ENCODE measurements at regions of chr19 and their contacts with region 1.

Region 1: DNA sequence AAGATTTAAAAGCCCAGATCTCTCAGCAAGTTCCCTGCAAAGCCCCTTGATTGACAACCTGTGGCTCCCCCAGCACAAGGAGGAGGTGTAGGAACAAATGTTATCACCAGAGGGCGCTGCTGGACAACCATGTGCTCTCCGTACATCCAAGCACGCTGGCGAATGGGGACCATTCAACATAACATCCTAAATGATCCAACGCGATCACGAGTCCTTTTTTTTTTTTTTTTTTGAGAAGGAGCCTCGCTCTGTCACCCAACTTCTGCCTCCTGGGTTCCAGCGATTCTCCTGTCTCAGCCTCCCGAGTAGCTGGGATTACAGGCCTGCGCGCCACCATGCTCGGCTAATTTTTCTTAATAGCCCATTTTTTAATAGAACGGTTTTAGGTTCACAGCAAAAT is 52.0 kb downstream of the NWD1 start:
- DNase-seq: peak; percentile 79 to 85 (median 83)
- ATAC-seq: peak; percentile 96
- H3K4me3 ChIP-seq: no peak overlapping the region
- H3K27ac ChIP-seq: no peak overlapping the region
- H3K4me1 ChIP-seq: no peaks in the 10 kb centered on the region
- H3K27me3 ChIP-seq: peaks cover 0 to 6% of the 10 kb centered on the region in 2 experiments; a peak in 2 of 5 replicates
- CTCF ChIP-seq: peak; percentile 84 to 90 (median 85)
- EP300 ChIP-seq: no peak
- POLR2A ChIP-seq: no peak
- RAD21 ChIP-seq: peak; percentile 71 to 91

Region 2: GRCh38 chr19:16637535-16637934 is 134.1 kb before region 1 on chr19:
- CTCF ChIA-PET with region 1: no interaction called
- POLR2A ChIA-PET with region 1: no interaction called
- in situ Hi-C with region 1: no loop called
- intact Hi-C with region 1: no loop called
- DNase-seq: no peak
- ATAC-seq: no peak
- H3K4me3 ChIP-seq: no peak overlapping the region
- H3K27ac ChIP-seq: no peak overlapping the region
- H3K4me1 ChIP-seq: no peaks in the 10 kb centered on the region; a peak in 1 of 5 replicates
- H3K27me3 ChIP-seq: no peaks in the 10 kb centered on the region
- CTCF ChIP-seq: no peak
- EP300 ChIP-seq: no peak
- POLR2A ChIP-seq: no peak
- RAD21 ChIP-seq: no peak

Region 3: DNA sequence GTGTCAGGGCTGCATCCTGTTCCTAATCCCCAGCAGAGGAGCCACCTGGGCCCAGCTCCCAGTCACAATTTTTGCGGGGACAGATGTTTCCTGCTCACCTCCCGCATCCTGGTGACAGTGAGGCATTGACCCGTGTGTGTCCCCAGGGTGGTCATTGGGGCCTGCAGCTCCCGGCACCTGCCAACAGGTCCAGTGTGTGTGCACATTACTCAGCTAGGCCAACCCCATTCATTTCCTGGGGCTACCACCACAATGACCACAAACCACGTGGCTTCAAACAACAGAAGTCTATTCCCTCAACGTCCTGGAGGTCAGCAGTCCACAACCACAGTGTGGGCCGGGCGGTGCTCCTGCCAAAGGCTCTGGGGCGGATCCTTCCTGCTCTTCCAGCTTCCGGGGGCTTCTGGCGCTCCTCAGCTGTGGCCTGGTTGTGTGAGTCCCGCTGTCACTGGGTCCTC is 105.3 kb after region 1 on chr19:
- CTCF ChIA-PET with region 1: no interaction called
- POLR2A ChIA-PET with region 1: no interaction called
- in situ Hi-C with region 1: no loop called
- intact Hi-C with region 1: no loop called
- DNase-seq: no peak
- ATAC-seq: no peak
- H3K4me3 ChIP-seq: no peak overlapping the region
- H3K27ac ChIP-seq: no peak overlapping the region
- H3K4me1 ChIP-seq: peaks cover 0 to 12% of the 10 kb centered on the region in 2 experiments; a peak in 2 of 5 replicates
- H3K27me3 ChIP-seq: no peaks in the 10 kb centered on the region
- CTCF ChIP-seq: no peak
- EP300 ChIP-seq: no peak
- POLR2A ChIP-seq: no peak
- RAD21 ChIP-seq: no peak

Region 4: GRCh38 chr19:16897154-16897855 is 125.7 kb after region 1 on chr19:
- CTCF ChIA-PET with region 1: interaction called, 21 read pairs
- POLR2A ChIA-PET with region 1: interaction called, 4 read pairs
- in situ Hi-C with region 1: no loop called
- intact Hi-C with region 1: loop called (anchors 2 kb)
- DNase-seq: peak; percentile 96 to 99 (median 96)
- ATAC-seq: peak; percentile 86
- H3K4me3 ChIP-seq: peak overlapping the region; percentile 71
- H3K27ac ChIP-seq: peak overlapping the region; percentile 88
- H3K4me1 ChIP-seq: peaks cover 14 to 61% of the 10 kb centered on the region in 2 experiments
- H3K27me3 ChIP-seq: no peaks in the 10 kb centered on the region
- CTCF ChIP-seq: no peak
- EP300 ChIP-seq: no peak
- POLR2A ChIP-seq: peak; percentile 77
- RAD21 ChIP-seq: no peak

Region 5: DNA sequence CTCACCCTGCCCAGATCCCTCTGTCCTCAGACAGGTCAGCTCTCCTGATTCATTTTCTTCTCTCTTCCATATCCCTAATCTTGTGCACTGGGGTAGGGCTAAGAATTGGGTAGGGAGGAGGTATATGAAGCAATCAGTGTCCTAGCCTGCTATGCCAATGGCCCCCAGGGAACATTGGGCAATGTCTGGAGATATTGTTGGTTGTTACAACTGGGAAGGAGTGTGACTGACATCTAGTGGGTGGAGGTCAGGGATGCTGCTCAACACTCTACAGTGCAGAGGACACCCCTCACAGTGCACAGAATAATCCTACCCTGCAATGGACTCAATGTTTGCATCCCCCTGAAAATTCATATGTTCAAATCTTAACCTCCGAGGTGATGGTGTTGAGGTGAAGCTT is 197.5 kb after region 1 on chr19:
- CTCF ChIA-PET with region 1: interaction called, 3 read pairs
- POLR2A ChIA-PET with region 1: no interaction called
- in situ Hi-C with region 1: no loop called
- intact Hi-C with region 1: loop called (anchors 2 kb)
- DNase-seq: peak in 2 of 4 experiments; percentile 37 to 47
- ATAC-seq: peak; percentile 95
- H3K4me3 ChIP-seq: no peak overlapping the region
- H3K27ac ChIP-seq: no peak overlapping the region
- H3K4me1 ChIP-seq: no peaks in the 10 kb centered on the region
- H3K27me3 ChIP-seq: peaks cover 6 to 19% of the 10 kb centered on the region in 2 experiments; a peak in 3 of 5 replicates
- CTCF ChIP-seq: peak; percentile 51 to 69 (median 64)
- EP300 ChIP-seq: no peak
- POLR2A ChIP-seq: no peak
- RAD21 ChIP-seq: peak in 1 of 2 experiments; percentile 82; a peak in 2 of 4 replicates

Region 6: GRCh38 chr19:17052439-17053210 is 281.0 kb after region 1 on chr19:
- CTCF ChIA-PET with region 1: interaction called, 10 read pairs
- POLR2A ChIA-PET with region 1: no interaction called
- in situ Hi-C with region 1: no loop called
- intact Hi-C with region 1: loop called (anchors 5 kb)
- DNase-seq: peak in 2 of 4 experiments; percentile 39 to 48
- ATAC-seq: peak; percentile 63
- H3K4me3 ChIP-seq: no peak overlapping the region
- H3K27ac ChIP-seq: no peak overlapping the region
- H3K4me1 ChIP-seq: no peaks in the 10 kb centered on the region
- H3K27me3 ChIP-seq: no peaks in the 10 kb centered on the region
- CTCF ChIP-seq: peak; percentile 32 to 65 (median 53)
- EP300 ChIP-seq: no peak
- POLR2A ChIP-seq: no peak
- RAD21 ChIP-seq: peak; percentile 21 to 44; a peak in 2 of 4 replicates

Region 7: GRCh38 chr19:17282488-17283255 is 511.1 kb after region 1 on chr19:
- CTCF ChIA-PET with region 1: no interaction called
- POLR2A ChIA-PET with region 1: no interaction called
- in situ Hi-C with region 1: no loop called
- intact Hi-C with region 1: loop called (anchors 5 kb)
- DNase-seq: peak; percentile 85 to 91 (median 88)
- ATAC-seq: peak; percentile 96
- H3K4me3 ChIP-seq: peak overlapping the region; percentile 51
- H3K27ac ChIP-seq: peak overlapping the region; percentile 58; the same call in 2 of the 3 replicates
- H3K4me1 ChIP-seq: peaks cover 2 to 31% of the 10 kb centered on the region in 2 experiments
- H3K27me3 ChIP-seq: no peaks in the 10 kb centered on the region
- CTCF ChIP-seq: peak; percentile 88 to 95 (median 94)
- EP300 ChIP-seq: no peak
- POLR2A ChIP-seq: 0 out of 2 replicates have a peak, but pooled peaks have one; percentile 32
- RAD21 ChIP-seq: peak; percentile 86 to 94